ENCODE measurements at regions of chr15 and their contacts with region 1.

Region 1: GRCh38 chr15:66946578-66947164 is 118.7 kb upstream of the SMAD3 start:
- DNase-seq: peak; percentile 74
- ATAC-seq: peak; percentile 78

Region 2: DNA sequence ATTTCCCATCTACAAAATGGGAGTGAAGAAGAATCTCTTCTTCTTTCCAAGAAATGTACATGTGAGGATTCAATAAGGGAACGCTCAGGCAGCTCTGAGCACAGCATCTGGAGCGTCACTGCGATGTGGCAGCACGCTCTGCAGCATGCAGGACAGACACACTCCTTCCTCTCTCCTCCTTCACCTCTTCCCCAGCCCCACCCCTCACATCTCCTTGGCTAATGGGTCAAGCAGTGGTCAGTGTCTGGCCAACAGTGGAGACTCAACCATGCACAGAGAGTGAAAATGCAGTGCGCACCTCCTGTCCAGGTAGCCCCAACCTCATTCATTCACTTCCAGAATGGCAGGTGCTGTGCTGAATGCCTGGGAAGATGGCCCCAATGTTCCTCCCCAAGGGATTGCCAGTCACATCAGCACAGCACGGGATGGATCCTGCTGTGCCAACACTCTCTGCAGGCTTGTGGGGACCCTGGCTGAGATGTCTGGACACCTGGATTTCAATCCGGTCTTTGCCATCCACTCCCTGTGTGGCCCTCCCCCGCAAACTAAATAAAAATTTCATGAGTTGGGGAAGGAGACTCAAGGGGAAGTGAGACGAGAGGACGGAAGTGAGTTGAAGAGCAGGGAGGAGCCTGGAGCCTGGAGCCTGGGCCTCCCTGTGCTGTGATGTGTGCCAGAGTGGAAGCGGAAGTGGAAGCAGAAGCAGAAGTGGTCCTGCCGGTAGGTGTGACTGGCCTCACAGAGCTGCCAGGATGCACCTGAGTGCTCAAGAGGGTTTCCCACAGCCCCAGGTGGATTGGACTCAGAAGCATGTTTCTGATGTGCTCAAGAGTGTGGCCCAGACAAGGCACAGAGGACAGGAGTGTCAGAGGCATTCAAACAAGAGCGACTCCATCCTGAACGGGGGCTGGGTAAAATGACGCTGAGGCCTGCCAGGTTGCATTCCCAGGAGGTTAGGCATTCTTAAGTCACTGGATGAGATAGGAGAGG is 80.8 kb before region 1 on chr15:
- intact Hi-C with region 1: no loop called
- DNase-seq: peak; percentile 58
- ATAC-seq: peak; percentile 46

Region 3: DNA sequence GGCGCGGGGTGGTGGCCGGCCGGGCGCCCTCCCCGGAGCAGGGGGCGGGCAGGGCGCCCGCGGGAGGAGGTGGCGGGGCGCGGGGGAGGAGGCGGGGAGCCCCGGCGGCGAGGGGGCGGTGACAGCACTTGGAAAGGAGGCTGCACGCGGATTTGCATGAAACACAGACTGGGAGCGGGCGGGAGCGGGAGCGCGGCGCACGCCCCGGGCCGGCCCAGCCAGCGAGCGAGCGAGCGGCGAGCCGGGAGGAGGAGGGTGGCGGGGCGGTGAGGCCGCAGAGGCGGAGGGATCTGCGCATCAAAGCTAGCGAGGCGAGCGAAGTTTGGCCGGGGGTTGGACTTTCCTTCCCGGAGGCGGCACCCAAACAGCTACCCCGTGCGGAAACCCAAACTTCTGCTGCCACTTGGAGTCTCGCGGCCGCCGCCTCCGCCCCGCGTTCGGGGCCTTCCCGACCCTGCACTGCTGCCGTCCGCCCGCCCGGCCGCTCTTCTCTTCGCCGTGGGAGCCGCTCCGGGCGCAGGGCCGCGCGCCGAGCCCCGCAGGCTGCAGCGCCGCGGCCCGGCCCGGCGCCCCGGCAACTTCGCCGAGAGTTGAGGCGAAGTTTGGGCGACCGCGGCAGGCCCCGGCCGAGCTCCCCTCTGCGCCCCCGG is 118.9 kb after region 1 on chr15 and contains the start of gene SMAD3:
- intact Hi-C with region 1: no loop called
- DNase-seq: peak; percentile 94
- ATAC-seq: peak; percentile 89
- total RNA-seq, gene SMAD3: 16.7 TPM

Region 4: GRCh38 chr15:67175643-67176071 is 229.0 kb after region 1 on chr15:
- intact Hi-C with region 1: no loop called
- DNase-seq: peak; percentile 32
- ATAC-seq: peak; percentile 11

Region 5: GRCh38 chr15:67216896-67217295 is 270.2 kb after region 1 on chr15:
- intact Hi-C with region 1: no loop called
- DNase-seq: no peak
- ATAC-seq: no peak

Region 6: DNA sequence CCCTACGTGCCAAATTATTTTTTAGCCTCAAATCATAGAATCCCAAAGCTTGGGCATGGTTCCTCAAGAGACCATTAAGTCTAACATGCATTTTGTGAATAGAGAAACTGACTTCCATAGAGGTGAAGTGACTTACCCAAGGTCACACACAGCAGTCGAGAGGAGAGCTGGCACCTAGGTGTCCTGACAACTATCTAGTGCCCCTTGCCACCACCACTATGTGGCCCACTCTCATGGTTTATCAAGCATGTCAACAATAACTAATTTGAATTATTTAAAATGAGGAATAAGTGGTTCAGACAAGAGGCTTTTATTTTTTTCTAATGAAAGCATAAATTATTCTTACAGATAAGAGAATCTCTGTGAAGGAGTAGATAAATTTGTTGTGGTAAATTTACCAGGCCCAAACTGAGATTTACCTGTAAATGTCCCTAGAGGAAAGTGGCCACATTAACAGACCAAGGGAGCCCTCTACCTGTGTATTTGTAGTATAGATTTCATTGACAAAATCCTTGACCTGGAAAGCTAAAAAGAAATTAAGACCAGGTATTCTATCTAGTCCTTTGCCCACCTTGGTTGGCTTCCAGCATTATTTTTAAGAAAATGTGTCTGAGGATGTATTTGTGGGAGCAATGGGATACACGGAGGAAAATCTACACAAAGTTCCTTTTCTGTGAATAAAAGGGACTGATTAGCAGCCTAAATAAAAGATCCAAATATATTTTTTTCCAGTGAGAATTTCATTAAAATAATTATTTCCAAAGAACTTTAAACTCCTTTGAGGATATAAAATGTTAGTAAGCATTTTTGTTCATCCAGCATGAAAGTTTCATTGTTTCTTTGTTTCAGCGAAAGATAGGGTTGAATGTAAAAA is 357.1 kb after region 1 on chr15:
- intact Hi-C with region 1: loop called (anchors 2 kb)
- DNase-seq: no peak
- ATAC-seq: peak; percentile 34

Region 7: DNA sequence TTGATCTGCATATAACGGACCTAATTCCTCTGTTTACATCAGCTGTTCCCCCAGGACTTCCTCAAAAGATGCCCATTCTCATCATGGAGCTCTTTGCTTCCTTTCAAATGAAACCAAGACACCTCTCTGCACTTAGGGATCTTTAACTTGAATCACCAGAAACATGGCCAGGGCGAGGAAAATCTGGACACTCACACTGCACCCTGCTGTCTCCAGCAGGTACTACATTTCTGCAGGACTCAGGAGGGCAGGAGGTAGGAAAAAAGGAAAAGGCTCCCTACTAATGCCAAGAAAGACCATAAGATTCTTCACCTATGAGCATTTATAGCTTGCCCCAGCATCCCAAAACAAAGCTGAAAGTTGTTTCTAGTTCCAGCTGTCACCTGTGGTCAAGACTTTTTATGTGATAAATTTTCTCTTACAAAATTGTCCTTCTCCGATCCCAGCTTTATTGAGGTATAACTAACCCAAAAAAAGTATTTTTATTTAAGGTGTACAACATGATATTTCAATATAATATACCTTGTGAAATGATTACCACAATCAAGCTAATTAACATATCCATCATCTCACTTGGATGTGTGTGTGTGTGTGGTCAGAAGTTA is 486.9 kb after region 1 on chr15:
- intact Hi-C with region 1: loop called (anchors 5 kb)
- DNase-seq: peak; percentile 40
- ATAC-seq: peak; percentile 54